CD4-positive, alpha-beta memory T cell (primary cell): ENCODE measurements at regions of chr14 and their contacts with region 1.

Region 1: DNA sequence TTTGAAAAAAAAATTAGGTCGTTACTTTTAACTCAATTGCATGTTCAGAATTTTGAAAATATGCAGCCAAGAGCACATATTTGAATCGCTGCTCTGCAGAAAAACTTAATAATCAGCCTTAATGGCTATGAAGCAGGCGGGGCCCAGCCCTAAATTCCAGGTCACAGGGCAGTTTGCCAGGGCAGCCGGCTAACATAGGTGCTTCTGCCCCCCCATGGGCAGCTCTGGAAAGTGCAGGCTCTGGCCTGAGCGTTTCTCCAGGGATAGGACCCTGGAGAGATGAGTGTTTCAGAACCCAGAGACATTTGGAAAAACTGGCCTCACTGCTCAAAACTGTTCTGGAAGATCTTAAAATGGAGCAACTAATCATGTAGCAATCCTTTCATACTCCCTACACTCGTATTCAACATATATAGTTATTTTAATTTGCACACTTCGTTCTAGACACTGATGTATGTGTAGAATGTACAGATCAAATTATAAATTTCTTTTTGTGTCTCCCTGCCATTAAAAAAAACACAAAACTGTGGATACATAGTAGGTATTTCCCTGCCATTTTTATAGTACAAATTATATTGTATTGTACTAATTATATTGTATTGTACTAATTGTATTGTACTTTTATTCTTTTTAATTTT is 26.0 kb upstream of the PTGR2 start:
- DNase-seq: peak; percentile 68 to 75 (median 74)
- H3K4me3 ChIP-seq: no peak overlapping the region
- H3K4me3 Mint-ChIP-seq: no peak overlapping the region
- H3K27ac ChIP-seq: no peak overlapping the region
- H3K27ac Mint-ChIP-seq: peak overlapping the region in 1 of 7 donors; percentile 42
- H3K4me1 ChIP-seq: peaks cover 13% of the 10 kb centered on the region
- H3K4me1 Mint-ChIP-seq: peaks cover 7 to 11% (median 10%) of the 10 kb centered on the region in 4 donors
- H3K27me3 ChIP-seq: no peaks in the 10 kb centered on the region
- H3K27me3 Mint-ChIP-seq: no peaks in the 10 kb centered on the region

Region 2: GRCh38 chr14:74038015-74038859 is 212.6 kb after region 1 on chr14:
- CTCF ChIA-PET with region 1: no interaction called
- POLR2A ChIA-PET with region 1: no interaction called
- intact Hi-C with region 1: loop called (anchors 2 kb)
- DNase-seq: peak in 4 of 5 donors; percentile 40 to 55 (median 50)
- H3K4me3 ChIP-seq: no peak overlapping the region
- H3K4me3 Mint-ChIP-seq: no peak overlapping the region
- H3K27ac ChIP-seq: no peak overlapping the region
- H3K27ac Mint-ChIP-seq: peak overlapping the region in 3 of 7 donors; percentile 5 to 41 (median 13)
- H3K4me1 ChIP-seq: no peaks in the 10 kb centered on the region
- H3K4me1 Mint-ChIP-seq: no peaks in the 10 kb centered on the region
- H3K27me3 ChIP-seq: no peaks in the 10 kb centered on the region
- H3K27me3 Mint-ChIP-seq: no peaks in the 10 kb centered on the region